Activated CD4-positive, alpha-beta memory T cell treated with anti-CD3 and anti-CD28 coated beads, Interleukin-2, amount 10 ng/mL, durations not matched to agents 7 days and 5 days (primary cell): ENCODE measurements at regions of chr17 and their contacts with region 1.

Region 1: DNA sequence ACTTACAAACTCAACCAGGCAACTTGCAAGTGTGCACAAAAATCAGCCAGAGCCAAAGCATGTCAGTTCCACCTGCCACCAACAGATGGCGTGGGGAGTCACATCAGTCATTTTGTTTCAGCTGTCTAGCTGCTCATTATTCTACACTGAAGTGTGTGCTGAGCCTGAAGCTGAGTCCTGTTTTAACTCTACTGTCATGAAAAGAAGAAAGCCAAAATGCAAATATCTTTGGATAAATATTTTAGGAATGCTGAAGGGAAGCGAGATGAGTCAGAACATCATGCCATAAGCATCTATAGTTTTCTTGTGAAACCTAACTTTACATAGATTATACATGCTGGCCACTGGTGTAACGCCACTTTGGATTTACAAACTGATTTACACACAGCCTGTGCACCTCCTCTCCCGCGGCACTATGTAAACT is 172.6 kb downstream of the CDK5R1 start:
- DNase-seq: peak; percentile 73
- H3K4me3 Mint-ChIP-seq: no peak overlapping the region
- H3K27ac Mint-ChIP-seq: no peak overlapping the region
- H3K4me1 Mint-ChIP-seq: peaks cover 7% of the 10 kb centered on the region
- H3K27me3 Mint-ChIP-seq: peaks cover 1% of the 10 kb centered on the region

Region 2: GRCh38 chr17:32648450-32648849 is 11.0 kb before region 1 on chr17:
- CTCF ChIA-PET with region 1: interaction called, 18 read pairs
- POLR2A ChIA-PET with region 1: no interaction called
- DNase-seq: no peak
- H3K4me3 Mint-ChIP-seq: no peak overlapping the region
- H3K27ac Mint-ChIP-seq: no peak overlapping the region
- H3K4me1 Mint-ChIP-seq: no peaks in the 10 kb centered on the region
- H3K27me3 Mint-ChIP-seq: peaks cover 3% of the 10 kb centered on the region

Region 3: DNA sequence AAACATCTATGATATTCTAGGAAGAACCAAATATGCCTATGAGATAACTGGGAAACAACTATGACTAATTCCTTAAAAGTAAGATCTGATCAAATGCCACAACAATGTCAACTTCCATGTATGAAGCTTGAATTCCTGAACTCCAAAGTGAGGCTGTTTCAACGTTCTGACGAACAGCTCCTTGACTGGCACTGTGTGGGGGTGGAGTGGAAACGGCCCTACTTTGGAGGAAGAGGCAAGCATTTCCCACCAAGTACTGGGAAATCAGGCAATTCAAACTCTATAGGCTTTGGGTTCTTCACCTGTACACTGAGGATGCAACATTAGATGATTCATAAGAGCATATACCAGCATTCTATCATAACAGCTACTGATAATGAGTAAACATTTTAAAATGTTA is 14.5 kb after region 1 on chr17:
- CTCF ChIA-PET with region 1: interaction called, 12 read pairs
- POLR2A ChIA-PET with region 1: no interaction called
- DNase-seq: no peak
- H3K4me3 Mint-ChIP-seq: no peak overlapping the region
- H3K27ac Mint-ChIP-seq: no peak overlapping the region
- H3K4me1 Mint-ChIP-seq: peaks cover 1% of the 10 kb centered on the region
- H3K27me3 Mint-ChIP-seq: no peaks in the 10 kb centered on the region